Heart right ventricle (tissue), 16 donors: ENCODE measurements at regions of chr7 and their contacts with region 1.

Region 1: DNA sequence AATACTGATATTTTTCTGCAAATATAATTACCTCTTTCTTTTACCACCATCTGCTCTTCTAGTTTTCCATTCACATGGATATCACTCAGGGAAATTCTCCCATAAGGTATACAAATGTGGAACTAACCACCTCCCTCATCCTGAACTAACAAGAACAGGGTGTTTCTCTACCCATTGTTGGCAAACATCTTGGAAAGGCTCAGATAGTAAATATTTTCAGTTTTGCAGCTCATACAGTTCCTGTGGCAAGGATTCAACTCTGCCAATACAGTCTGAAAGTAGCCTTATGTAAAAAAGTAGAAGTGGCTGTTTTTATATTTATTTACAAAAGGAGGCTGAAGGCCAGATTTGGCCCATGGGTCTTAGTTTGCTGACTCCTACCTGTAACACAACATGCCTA is 513.0 kb upstream of the TEX47 start:
- DNase-seq: no peak
- ATAC-seq: no peak
- H3K4me3 ChIP-seq: no peak overlapping the region
- H3K27ac ChIP-seq: no peak overlapping the region
- H3K4me1 ChIP-seq: no peaks in the 10 kb centered on the region
- H3K27me3 ChIP-seq: no peaks in the 10 kb centered on the region
- CTCF ChIP-seq: no peak

Region 2: DNA sequence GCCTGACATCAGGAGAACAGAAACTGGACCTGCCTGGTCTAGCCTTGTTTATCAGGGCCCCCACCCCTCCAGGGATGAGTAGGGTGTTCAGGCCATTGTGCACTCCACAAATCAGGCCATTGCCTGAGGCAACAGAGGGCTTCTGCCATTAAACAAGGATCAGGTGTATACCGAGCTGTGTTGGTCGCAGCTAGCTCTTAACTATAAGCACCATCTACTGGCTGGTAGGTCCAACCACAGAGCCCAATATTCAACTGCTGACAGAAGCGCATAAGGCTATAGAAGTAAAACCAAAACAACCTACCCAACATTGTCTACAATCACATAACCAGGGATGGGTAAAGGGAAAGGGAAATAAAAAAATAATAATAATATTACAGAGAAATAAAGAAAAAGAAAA is 61.3 kb before region 1 on chr7:
- intact Hi-C with region 1: loop called in 1 of 10 experiments (anchors 10 kb)
- DNase-seq: no peak
- ATAC-seq: no peak
- H3K4me3 ChIP-seq: no peak overlapping the region
- H3K27ac ChIP-seq: no peak overlapping the region
- H3K4me1 ChIP-seq: no peaks in the 10 kb centered on the region
- H3K27me3 ChIP-seq: no peaks in the 10 kb centered on the region
- CTCF ChIP-seq: no peak

Region 3: GRCh38 chr7:89451911-89452310 is 143.4 kb after region 1 on chr7:
- intact Hi-C with region 1: no loop called
- DNase-seq: no peak
- ATAC-seq: no peak
- H3K4me3 ChIP-seq: no peak overlapping the region
- H3K27ac ChIP-seq: no peak overlapping the region
- H3K4me1 ChIP-seq: no peaks in the 10 kb centered on the region
- H3K27me3 ChIP-seq: no peaks in the 10 kb centered on the region
- CTCF ChIP-seq: no peak

Region 4: DNA sequence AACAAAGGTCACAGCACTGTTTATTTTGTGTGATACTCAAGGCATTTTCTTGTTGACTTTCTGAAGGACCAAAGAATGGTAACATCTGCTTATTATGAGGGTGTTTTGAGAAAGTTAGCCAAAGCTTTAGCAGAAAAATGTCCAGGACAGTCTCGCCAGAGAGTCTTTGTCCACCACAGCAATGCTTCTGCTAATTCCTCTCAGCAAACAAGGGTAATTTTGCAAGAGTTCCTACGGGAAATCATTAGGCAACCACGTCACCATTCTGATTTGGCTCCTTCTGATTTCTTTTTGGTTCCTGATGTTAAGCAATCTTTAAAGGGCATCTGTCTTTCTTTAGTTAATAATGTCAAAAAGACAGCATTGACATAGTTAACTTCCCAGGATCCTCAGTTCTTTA is 206.4 kb after region 1 on chr7:
- intact Hi-C with region 1: no loop called
- DNase-seq: no peak
- ATAC-seq: no peak
- H3K4me3 ChIP-seq: no peak overlapping the region
- H3K27ac ChIP-seq: no peak overlapping the region
- H3K4me1 ChIP-seq: no peaks in the 10 kb centered on the region
- H3K27me3 ChIP-seq: no peaks in the 10 kb centered on the region
- CTCF ChIP-seq: no peak